ENCODE measurements at regions of chr17 and their contacts with region 1.

Region 1: DNA sequence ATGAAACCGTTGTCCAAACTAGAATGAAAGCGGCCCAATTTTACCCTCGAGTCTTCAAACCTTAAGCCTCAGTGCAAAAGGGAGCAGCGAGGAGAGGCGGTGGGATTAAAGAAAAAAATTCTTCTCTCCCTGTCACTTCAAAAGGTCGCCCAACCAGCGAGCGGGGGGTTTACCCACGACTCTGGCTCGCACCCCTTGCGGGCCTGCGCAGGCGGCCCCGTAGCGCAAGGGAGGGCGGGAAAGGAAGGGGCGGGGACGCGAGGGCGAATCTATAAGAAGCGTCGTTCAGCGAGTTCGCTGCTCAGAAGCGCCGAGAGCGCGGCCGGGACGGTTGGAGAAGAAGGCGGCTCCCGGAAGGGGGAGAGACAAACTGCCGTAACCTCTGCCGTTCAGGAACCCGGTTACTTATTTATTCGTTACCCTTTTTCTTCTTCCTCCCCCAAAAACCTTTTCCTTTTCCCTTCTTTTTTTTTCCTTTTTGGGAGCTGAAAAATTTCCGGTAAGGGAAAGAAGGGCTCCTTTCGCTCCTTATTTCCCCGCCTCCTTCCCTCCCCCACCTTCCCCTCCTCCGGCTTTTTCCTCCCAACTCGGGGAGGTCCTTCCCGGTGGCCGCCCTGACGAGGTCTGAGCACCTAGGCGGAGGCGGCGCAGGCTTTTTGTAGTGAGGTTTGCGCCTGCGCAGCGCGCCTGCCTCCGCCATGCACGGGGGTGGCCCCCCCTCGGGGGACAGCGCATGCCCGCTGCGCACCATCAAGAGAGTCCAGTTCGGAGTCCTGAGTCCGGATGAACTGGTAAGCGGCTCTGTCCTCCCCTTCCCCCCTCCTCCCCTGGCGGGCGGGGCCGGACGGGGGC is at the start of gene POLR2A:
- DNase-seq: peak; percentile 79 to 99
- H3K4me3 ChIP-seq: peak within 1 kb of the TSS; percentile 88
- H3K27ac ChIP-seq: peak within 1 kb of the TSS; percentile 95
- H3K4me1 ChIP-seq: peaks cover 18% of the 10 kb centered on the region
- H3K27me3 ChIP-seq: no peaks in the 10 kb centered on the region
- CTCF ChIP-seq: no peak
- total RNA-seq, gene POLR2A: 149 and 166 TPM in 2 replicates

Region 2: DNA sequence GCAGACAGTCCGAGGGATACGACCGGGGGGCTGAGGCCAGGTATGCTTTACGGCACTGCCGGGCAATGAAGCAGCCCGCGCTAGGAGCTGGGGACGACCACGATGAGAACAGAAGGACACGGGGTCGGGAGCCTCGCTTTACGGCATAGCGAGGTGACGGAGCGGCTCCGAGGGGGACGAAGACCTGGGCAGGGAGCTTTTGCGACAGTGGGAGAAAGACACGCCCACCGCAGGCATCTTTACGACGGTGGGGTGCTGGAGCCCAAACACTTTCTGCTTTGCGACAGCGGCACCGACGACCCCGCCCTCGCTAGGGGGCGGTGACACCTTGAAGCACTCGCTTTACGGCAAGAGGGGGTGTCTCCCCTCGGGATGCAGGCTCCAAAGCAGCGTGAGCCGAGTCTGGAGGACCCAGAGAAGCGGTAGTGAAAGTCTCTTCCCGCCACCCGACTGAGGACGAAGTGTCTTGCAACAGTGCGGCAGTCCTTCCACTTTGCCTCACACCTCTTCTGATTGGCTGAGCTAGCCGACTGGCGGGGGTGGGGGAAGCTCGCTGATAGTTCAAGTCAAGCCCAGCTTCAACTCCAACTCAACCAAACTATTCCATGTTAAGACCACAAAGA is 154.8 kb before region 1 on chr17:
- CTCF ChIA-PET with region 1: no interaction called
- POLR2A ChIA-PET with region 1: no interaction called
- intact Hi-C with region 1: no loop called
- DNase-seq: peak; percentile 94 to 98
- H3K4me3 ChIP-seq: peak overlapping the region; percentile 100
- H3K27ac ChIP-seq: peak overlapping the region; percentile 67
- H3K4me1 ChIP-seq: peaks cover 16% of the 10 kb centered on the region
- H3K27me3 ChIP-seq: no peaks in the 10 kb centered on the region
- CTCF ChIP-seq: no peak

Region 3: GRCh38 chr17:7515911-7516610 is 31.8 kb after region 1 on chr17:
- CTCF ChIA-PET with region 1: no interaction called
- POLR2A ChIA-PET with region 1: interaction called, 15 read pairs
- intact Hi-C with region 1: no loop called
- DNase-seq: no peak
- H3K4me3 ChIP-seq: no peak overlapping the region
- H3K27ac ChIP-seq: no peak overlapping the region
- H3K4me1 ChIP-seq: no peaks in the 10 kb centered on the region
- H3K27me3 ChIP-seq: no peaks in the 10 kb centered on the region
- CTCF ChIP-seq: no peak

Region 4: DNA sequence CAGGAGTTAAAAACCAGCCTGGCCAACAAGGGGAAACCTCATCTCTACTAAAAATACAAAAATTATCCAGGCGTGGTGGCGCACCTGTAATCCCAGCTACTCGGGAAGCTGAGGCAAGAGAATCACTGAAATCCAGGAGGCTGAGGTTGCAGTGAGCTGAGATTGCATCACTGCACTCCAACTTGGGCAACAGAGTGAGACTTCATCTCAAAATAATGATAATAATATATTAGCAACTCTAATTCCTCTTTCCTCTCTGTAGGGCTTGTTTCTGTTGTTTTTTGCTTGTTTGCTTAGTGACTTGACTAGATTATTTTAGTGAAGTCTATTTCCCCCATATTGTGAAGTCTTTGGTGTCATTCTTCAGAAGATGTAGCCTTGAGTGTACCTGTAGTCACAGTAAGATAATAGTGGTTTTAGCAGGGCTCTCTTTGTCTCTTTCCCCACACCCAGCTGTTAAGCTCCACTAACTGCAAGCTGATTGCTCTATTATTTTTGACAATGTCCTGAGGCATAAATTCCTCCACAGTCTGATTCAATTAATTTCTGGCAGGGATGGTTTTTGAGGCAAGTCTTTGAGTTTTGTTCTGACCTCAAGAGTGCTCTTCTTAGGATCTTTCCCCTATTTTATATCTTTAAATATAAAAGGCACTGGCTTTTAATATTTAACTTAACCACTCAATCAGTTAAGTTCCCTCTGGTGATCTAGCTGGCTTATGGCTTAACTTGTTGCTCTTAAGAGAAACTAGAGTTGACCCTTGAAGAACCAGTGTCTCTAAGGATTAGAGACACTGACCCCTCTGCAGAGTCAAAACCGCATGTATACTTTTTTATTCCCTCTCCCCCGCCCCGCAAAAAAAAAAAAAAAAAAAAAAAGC is 46.0 kb after region 1 on chr17:
- CTCF ChIA-PET with region 1: no interaction called
- POLR2A ChIA-PET with region 1: no interaction called
- intact Hi-C with region 1: no loop called
- DNase-seq: no peak
- H3K4me3 ChIP-seq: no peak overlapping the region
- H3K27ac ChIP-seq: no peak overlapping the region
- H3K4me1 ChIP-seq: no peaks in the 10 kb centered on the region
- H3K27me3 ChIP-seq: no peaks in the 10 kb centered on the region
- CTCF ChIP-seq: no peak

Region 5: DNA sequence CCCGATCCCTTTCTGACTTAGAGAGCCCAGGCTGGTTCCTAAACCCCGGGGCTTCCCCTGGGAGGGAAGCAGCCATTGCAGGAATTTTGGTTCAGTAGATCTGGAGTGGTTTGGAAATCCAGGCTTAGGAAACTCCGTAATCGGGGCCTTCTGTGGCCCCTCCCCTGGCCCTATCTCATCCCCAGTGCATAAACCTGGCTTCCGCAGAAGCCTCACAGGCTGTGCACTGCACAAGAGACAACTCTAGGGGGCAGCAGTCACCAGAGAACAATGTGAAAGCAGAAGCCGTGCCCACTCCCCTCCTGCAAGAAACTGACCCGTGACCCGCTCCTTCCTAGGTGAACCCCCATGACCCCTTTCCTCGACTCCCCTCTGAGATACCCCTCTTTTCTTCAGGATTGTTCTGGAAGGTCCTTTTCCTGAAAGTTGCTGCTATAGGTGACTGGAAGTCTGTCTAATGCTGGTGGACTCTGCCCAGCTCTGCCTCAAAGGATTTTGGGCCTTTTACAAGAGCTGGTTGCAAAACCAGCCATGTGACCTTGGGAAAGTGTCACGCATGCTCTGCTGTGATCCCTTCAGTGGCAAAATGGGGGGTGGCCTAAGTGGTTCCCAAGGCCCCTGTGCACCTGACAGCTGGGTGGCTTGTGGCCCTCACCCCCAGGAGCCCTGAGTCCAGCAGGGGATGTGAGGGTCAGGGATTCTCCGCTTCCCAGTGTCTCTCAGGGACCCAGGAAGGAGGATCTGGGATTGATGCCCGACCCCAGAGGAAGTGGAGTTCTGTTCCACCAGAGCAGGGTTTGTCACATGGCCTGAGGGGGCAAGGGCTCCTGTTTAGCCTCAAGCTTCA is 532.6 kb after region 1 on chr17:
- CTCF ChIA-PET with region 1: no interaction called
- POLR2A ChIA-PET with region 1: no interaction called
- intact Hi-C with region 1: no loop called
- DNase-seq: peak; percentile 35 to 68
- H3K4me3 ChIP-seq: peak overlapping the region; percentile 50
- H3K27ac ChIP-seq: no peak overlapping the region
- H3K4me1 ChIP-seq: no peaks in the 10 kb centered on the region
- H3K27me3 ChIP-seq: no peaks in the 10 kb centered on the region
- CTCF ChIP-seq: peak; percentile 70

Measured in PC-9 (cell line).